ENCODE measurements at regions of chr13 and their contacts with region 1.

Region 1: GRCh38 chr13:77459592-77459991 is 75.9 kb upstream of the SCEL start:
- DNase-seq: no peak
- ATAC-seq: no peak
- H3K4me3 ChIP-seq: no peak overlapping the region
- H3K27ac ChIP-seq: no peak overlapping the region
- H3K4me1 ChIP-seq: peaks cover 0 to 27% (median 0%) of the 10 kb centered on the region in 9 donors
- H3K27me3 ChIP-seq: peaks cover 0 to 4% (median 0%) of the 10 kb centered on the region in 7 donors
- CTCF ChIP-seq: no peak

Region 2: DNA sequence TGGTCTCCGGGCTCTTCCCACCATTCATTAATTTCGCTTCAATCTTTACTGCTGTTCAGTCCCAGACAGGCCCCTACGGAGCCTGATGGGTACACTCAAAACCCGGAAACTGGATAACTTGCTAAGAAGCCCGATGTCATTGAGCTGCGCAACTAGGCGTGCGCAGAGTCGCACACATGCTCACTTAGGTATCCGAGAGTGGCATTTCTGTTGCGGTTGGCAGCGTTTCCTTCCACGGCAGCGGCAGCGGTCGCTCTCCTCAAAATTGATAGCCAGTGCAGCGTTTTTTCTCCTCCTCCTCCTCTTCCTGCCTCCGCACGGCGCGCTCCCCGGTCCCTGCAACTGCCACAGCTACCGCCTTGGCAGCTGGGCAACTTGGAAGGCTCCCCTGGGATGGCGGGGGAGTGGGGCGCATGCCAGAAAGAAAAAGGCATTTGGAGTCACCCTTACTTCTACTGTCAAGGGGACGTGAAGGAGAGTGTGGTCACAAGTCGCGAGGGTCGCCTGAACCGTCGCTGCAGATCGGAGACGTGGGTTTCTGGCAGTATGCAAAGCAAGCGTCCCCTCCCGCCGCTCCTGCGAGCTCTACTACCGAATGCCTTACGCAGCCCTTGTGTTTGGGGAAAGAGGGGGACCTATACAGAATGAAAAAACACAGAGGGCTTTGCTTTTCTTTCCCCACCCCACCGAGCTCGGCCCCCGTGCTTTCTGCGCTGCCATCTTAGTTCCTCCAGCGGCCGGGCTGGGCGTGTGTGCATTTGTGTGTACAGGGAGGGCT is 130.3 kb before region 1 on chr13:
- intact Hi-C with region 1: no loop called
- DNase-seq: peak; percentile 75 to 86
- ATAC-seq: peak; percentile 74 to 88 (median 86)
- H3K4me3 ChIP-seq: peak overlapping the region; percentile 68 to 97 (median 82)
- H3K27ac ChIP-seq: peak overlapping the region; percentile 70 to 94 (median 87)
- H3K4me1 ChIP-seq: peaks cover 0 to 40% (median 29%) of the 10 kb centered on the region in 9 donors
- H3K27me3 ChIP-seq: no peaks in the 10 kb centered on the region
- CTCF ChIP-seq: peak in 2 of 9 donors; percentile 8 to 12

Region 3: GRCh38 chr13:77437267-77437666 is 22.3 kb before region 1 on chr13:
- intact Hi-C with region 1: loop called in 1 of 10 experiments (anchors 2 kb)
- DNase-seq: no peak
- ATAC-seq: no peak
- H3K4me3 ChIP-seq: no peak overlapping the region
- H3K27ac ChIP-seq: no peak overlapping the region
- H3K4me1 ChIP-seq: no peaks in the 10 kb centered on the region
- H3K27me3 ChIP-seq: no peaks in the 10 kb centered on the region
- CTCF ChIP-seq: no peak

Measured in heart right ventricle (tissue), 16 donors.